Mammary epithelial cell (primary cell): ENCODE measurements at regions of chr9 and their contacts with region 1.

Region 1: DNA sequence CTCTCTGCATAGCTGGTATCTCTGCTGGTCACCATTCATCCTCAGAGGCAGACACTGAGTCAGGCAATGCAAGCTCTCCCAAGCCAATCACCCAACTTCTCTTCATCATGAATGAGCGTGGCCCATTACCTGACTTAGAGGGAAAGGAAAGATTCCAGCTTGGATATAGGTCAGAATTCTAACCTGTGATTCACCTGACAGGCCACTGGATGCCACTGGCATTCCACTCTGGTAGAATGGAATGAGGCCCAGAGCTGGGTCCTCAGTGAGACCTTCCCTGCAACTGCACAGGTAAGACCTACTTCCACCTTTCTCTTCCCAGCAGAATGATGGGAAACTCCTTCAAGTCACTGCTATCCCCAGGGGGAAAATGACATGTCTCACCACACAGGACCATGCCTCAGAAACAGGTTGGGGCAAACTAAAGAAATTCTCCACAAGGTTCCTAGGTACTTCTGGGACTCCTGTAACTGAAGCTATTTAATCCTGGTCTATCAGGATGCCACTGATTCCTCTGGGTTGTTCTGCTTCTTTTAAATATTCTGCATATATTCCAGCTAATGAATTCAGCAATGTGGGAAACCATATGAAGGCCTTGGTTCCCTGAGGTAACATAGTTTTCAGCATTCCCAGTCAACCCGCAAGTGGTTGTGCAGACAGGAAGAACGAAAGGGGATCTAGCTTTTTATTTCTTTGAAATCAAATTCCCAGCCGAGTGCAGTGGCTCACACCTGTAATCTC is 62.0 kb downstream of the SUSD1 start:
- DNase-seq: peak; percentile 85
- H3K4me3 ChIP-seq: no peak overlapping the region
- H3K27ac ChIP-seq: peak overlapping the region; percentile 75
- H3K4me1 ChIP-seq: peaks cover 27% of the 10 kb centered on the region
- H3K27me3 ChIP-seq: no peaks in the 10 kb centered on the region
- CTCF ChIP-seq: peak; percentile 83 to 89

Region 2: DNA sequence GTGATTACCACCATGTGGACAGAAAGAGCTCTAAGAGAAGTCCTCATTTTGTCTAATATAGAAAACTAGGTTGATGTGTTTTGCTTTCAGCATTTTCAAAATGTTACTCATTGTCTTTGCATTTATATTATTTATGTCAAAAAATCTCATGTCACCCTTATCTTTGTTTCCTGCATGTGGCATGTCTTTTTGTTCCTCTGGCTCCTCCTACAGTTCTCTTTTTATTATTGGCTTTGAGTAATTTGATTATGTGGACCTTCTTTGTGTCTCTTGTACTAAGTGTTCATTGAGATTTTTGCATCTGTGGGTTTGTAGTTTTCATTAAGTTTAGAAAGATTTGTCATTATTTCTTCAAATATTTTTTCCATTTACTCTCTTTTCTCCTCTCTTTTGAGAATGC is 392.9 kb before region 1 on chr9:
- CTCF ChIA-PET with region 1: no interaction called
- dilution Hi-C with region 1: no loop called
- in situ Hi-C with region 1: no loop called
- intact Hi-C with region 1: no loop called
- DNase-seq: no peak
- H3K4me3 ChIP-seq: no peak overlapping the region
- H3K27ac ChIP-seq: no peak overlapping the region
- H3K4me1 ChIP-seq: no peaks in the 10 kb centered on the region
- H3K27me3 ChIP-seq: no peaks in the 10 kb centered on the region
- CTCF ChIP-seq: no peak

Region 3: DNA sequence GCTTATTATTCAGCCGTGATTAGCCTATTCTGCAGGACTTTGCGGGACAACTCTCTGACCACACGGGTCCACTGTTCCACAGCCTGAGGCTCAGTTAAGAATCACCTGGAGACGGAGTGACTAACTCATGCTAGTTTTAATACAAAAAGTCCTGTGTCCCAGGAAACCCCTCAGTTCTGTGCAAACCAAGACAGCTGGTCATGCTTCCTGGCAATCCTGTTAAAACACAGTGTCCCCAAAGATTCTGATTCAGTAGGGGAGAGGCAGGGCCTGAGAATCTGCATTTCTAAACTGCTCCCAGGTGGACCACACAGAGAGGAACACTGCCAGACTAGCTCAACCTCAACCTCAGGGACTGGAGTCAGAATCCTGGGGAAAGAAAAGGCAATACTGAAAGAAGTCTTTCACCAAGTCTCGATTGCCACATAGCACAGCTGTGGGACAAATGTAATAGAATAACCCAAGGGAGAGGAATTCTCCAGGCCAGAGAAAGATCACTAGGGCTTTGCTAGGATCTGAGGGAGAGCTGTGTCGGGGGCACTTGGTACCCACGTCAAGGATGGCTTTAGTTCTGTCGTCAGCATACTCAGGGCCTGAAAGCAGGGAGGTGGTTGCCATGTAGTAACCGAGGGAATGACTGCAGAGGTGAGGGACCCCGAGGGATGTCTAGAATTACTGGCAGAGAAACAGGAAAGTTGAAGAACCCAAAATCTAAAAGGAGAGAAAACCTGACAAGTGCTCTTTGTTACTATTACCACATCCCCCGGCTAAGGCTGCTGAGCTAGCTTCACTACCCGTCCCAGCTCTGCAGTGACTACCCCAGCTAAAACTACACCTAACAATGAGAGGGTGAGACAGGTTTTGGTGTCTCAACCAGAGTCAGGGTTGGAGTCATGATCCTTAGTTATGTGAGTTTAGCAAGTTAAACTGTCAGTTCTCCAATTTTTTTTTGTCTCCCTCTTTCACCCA is 53.3 kb after region 1 on chr9:
- CTCF ChIA-PET with region 1: no interaction called
- dilution Hi-C with region 1: no loop called
- in situ Hi-C with region 1: no loop called
- intact Hi-C with region 1: loop called (anchors 1 kb)
- DNase-seq: peak; percentile 98
- H3K4me3 ChIP-seq: no peak overlapping the region
- H3K27ac ChIP-seq: peak overlapping the region; percentile 88
- H3K4me1 ChIP-seq: peaks cover 38% of the 10 kb centered on the region
- H3K27me3 ChIP-seq: no peaks in the 10 kb centered on the region
- CTCF ChIP-seq: peak; percentile 47 to 49

Region 4: GRCh38 chr9:112203536-112203935 is 90.4 kb after region 1 on chr9:
- CTCF ChIA-PET with region 1: no interaction called
- dilution Hi-C with region 1: loop called (anchors 10 kb)
- in situ Hi-C with region 1: no loop called
- intact Hi-C with region 1: loop called (anchors 10 kb)
- DNase-seq: peak; percentile 60
- H3K4me3 ChIP-seq: no peak overlapping the region
- H3K27ac ChIP-seq: peak overlapping the region; percentile 28
- H3K4me1 ChIP-seq: peaks cover 15% of the 10 kb centered on the region
- H3K27me3 ChIP-seq: no peaks in the 10 kb centered on the region
- CTCF ChIP-seq: no peak

Region 5: GRCh38 chr9:112333639-112334431 is 220.7 kb after region 1 on chr9:
- CTCF ChIA-PET with region 1: interaction called, 4 read pairs
- dilution Hi-C with region 1: no loop called
- in situ Hi-C with region 1: no loop called
- intact Hi-C with region 1: loop called (anchors 1 kb)
- DNase-seq: peak; percentile 94
- H3K4me3 ChIP-seq: peak overlapping the region; percentile 97 to 99 (median 98)
- H3K27ac ChIP-seq: peak overlapping the region; percentile 93
- H3K4me1 ChIP-seq: peaks cover 18% of the 10 kb centered on the region
- H3K27me3 ChIP-seq: no peaks in the 10 kb centered on the region
- CTCF ChIP-seq: peak in 1 of 2 donors; percentile 58

Region 6: GRCh38 chr9:112486221-112487007 is 373.3 kb after region 1 on chr9 and contains the start of gene KIAA1958:
- CTCF ChIA-PET with region 1: no interaction called
- dilution Hi-C with region 1: no loop called
- in situ Hi-C with region 1: no loop called
- intact Hi-C with region 1: loop called (anchors 10 kb)
- DNase-seq: peak; percentile 73
- H3K4me3 ChIP-seq: peak within 1 kb of the TSS; percentile 65 to 88 (median 75)
- H3K27ac ChIP-seq: no peak within 1 kb of the TSS
- H3K4me1 ChIP-seq: peaks cover 13% of the 10 kb centered on the region
- H3K27me3 ChIP-seq: no peaks in the 10 kb centered on the region
- CTCF ChIP-seq: no peak
- total RNA-seq, gene KIAA1958: 2.5 TPM